IMR-90 (cell line): ENCODE measurements at regions of chr6 and their contacts with region 1.

Region 1: DNA sequence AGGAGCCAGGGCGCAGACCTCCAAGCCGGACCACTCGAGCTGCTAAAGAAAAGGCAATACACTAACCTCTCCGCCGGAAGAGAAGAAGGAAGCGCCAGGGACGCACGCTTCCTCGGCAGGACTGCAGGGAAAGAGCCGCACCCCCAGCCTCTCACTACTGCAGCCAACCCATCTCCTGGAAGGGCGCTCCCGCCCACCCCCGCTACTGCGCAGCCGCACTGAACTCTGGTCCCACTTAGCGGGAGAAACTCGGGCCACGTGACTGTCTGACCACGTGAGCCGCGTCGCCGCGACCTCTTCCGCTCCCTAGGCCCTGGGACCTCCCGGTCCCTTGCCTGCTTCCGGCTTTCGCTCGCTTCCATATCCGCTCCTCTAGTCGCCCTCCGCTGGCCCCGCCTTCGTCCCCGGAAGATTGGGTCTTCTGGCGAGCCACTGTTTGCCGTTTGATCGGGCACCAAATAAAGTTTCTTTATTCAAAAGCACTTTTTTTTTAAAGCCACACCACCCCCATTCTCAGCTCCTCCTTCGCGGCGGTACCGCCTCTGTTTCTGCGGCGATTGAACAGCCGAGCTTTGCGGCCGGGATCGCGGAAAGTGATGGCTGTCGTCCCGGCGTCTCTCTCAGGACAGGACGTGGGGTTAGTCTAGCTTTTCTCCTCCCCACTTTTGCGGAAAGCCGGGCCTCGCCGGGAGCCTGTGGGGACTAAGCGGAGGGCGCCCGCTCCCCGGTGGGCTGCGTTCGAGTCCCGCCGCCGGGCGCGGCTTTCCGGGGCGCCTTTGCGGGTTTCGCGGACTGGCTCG is at the start of gene RMND1:
- DNase-seq: peak; percentile 100
- ATAC-seq: peak; percentile 98
- H3K4me3 ChIP-seq: peak within 1 kb of the TSS; percentile 84
- H3K27ac ChIP-seq: peak within 1 kb of the TSS; percentile 84
- H3K4me1 ChIP-seq: 0 out of 2 replicates have a peak, but pooled peaks cover 2% of the 10 kb centered on the region
- H3K27me3 ChIP-seq: no peaks in the 10 kb centered on the region
- CTCF ChIP-seq: no peak
- POLR2A ChIP-seq: peak; percentile 86
- RAD21 ChIP-seq: no peak
- total RNA-seq, gene RMND1: 24.6 and 32.8 TPM in 2 replicates

Region 2: GRCh38 chr6:151276112-151276745 is 175.9 kb before region 1 on chr6:
- CTCF ChIA-PET with region 1: no interaction called
- POLR2A ChIA-PET with region 1: no interaction called
- dilution Hi-C with region 1: no loop called
- in situ Hi-C with region 1: no loop called
- intact Hi-C with region 1: no loop called
- DNase-seq: peak; percentile 43
- ATAC-seq: peak; percentile 86
- H3K4me3 ChIP-seq: no peak overlapping the region
- H3K27ac ChIP-seq: no peak overlapping the region
- H3K4me1 ChIP-seq: no peaks in the 10 kb centered on the region
- H3K27me3 ChIP-seq: no peaks in the 10 kb centered on the region
- CTCF ChIP-seq: no peak
- POLR2A ChIP-seq: no peak
- RAD21 ChIP-seq: no peak

Region 3: DNA sequence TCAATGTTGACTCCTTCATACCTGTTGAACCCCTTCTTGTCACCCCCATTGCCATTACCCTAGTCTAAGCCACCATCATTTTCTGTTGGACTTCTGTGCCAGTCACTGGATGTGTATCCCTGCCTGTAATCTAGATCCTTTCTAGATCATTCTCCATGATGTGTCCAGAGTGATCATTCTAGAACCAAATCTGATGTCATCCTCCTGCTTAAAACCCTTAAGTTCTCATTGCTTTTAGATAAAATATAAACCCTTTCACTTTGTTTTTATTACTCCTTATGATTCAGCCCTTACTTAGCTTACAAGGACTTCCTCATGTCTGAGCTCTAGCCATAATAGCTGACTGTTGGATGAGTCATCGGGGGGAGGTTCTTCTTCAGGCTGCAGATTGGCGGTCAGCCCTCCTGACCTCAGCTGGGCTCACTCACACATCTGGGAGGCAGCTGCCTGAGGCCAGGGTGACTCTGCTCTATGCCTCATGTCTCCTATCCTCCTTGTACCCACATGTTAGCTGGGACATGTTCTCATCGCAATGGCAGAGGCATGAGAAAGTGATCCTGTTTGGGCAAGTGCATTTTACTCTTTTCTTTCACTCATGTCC is 642.9 kb after region 1 on chr6:
- CTCF ChIA-PET with region 1: no interaction called
- POLR2A ChIA-PET with region 1: no interaction called
- dilution Hi-C with region 1: no loop called
- in situ Hi-C with region 1: no loop called
- intact Hi-C with region 1: loop called (anchors 2 kb)
- DNase-seq: peak; percentile 100
- ATAC-seq: peak; percentile 88
- H3K4me3 ChIP-seq: no peak overlapping the region
- H3K27ac ChIP-seq: peak overlapping the region; percentile 87
- H3K4me1 ChIP-seq: peaks cover 27% of the 10 kb centered on the region
- H3K27me3 ChIP-seq: no peaks in the 10 kb centered on the region
- CTCF ChIP-seq: no peak
- POLR2A ChIP-seq: no peak
- RAD21 ChIP-seq: no peak